Activated T-helper 2 cell treated with anti-CD3 and anti-CD28 coated beads, Interferon-gamma antibody, Interleukin-2, Interleukin-4, amounts not matched to agents 10 μg/mL and 5 μg/mL and 100 μg/mL, durations not matched to agents 14 hours and 24 hours and 36 hours (primary cell): ENCODE measurements at regions of chr21 and their contacts with region 1.

Region 1: GRCh38 chr21:43916691-43917514 is 51.9 kb downstream of the AGPAT3 start:
- DNase-seq: peak; percentile 62
- H3K4me3 Mint-ChIP-seq: peak overlapping the region; percentile 81
- H3K27ac Mint-ChIP-seq: peak overlapping the region; percentile 83
- H3K4me1 Mint-ChIP-seq: peaks cover 54% of the 10 kb centered on the region
- H3K27me3 Mint-ChIP-seq: no peaks in the 10 kb centered on the region

Region 2: GRCh38 chr21:43810505-43811261 is 106.2 kb before region 1 on chr21:
- intact Hi-C with region 1: loop called (anchors 1 kb)
- DNase-seq: peak; percentile 85
- H3K4me3 Mint-ChIP-seq: no peak overlapping the region
- H3K27ac Mint-ChIP-seq: peak overlapping the region; percentile 4
- H3K4me1 Mint-ChIP-seq: peaks cover 11% of the 10 kb centered on the region
- H3K27me3 Mint-ChIP-seq: no peaks in the 10 kb centered on the region

Region 3: GRCh38 chr21:43842742-43843141 is 74.2 kb before region 1 on chr21:
- intact Hi-C with region 1: no loop called
- DNase-seq: no peak
- H3K4me3 Mint-ChIP-seq: peak overlapping the region; percentile 20
- H3K27ac Mint-ChIP-seq: peak overlapping the region; percentile 29
- H3K4me1 Mint-ChIP-seq: peaks cover 16% of the 10 kb centered on the region
- H3K27me3 Mint-ChIP-seq: no peaks in the 10 kb centered on the region

Region 4: DNA sequence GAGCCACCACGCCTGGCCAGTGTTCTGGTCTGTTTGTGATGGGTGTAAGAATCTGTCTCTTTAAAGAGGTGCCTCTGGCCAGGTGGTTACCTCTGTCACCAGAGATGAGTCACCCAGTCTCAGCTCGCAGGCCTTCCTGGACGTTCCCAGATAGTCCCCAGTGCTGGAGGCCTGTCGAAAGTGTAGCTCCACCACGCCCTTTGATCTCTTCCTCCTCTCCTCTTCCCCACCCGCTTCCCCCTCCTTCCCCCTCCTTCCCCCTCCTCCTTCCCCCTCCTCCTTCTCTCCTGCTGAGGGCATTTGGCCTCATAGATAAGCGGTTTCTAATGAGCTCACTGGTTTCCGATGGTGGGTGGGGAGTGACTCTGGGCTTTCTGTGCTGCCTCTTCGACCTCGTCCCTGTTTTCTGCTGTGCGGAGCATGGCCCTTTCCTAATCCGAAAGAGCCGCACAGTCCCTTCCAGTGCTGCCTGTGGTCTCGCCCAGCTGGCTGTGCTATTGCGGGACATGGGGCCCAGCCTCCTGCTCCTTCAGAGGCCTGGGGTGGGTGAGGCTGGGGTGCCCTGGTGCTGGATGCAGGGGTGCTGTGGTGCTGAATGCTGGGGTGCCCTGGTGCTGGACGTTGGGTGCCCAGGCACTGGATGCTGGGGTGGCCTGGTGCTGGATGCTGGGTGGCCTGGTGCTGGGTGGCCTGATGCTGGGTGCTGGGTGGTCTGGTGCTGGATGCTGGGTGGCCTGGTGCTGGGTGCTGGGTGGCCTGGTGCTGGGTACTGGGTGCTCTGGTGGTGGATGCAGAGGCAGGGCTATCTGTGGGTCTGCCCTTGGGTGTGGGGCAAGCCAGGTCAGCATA is 32.7 kb before region 1 on chr21:
- intact Hi-C with region 1: loop called (anchors 5 kb)
- DNase-seq: no peak
- H3K4me3 Mint-ChIP-seq: no peak overlapping the region
- H3K27ac Mint-ChIP-seq: peak overlapping the region; percentile 79
- H3K4me1 Mint-ChIP-seq: peaks cover 62% of the 10 kb centered on the region
- H3K27me3 Mint-ChIP-seq: no peaks in the 10 kb centered on the region

Region 5: DNA sequence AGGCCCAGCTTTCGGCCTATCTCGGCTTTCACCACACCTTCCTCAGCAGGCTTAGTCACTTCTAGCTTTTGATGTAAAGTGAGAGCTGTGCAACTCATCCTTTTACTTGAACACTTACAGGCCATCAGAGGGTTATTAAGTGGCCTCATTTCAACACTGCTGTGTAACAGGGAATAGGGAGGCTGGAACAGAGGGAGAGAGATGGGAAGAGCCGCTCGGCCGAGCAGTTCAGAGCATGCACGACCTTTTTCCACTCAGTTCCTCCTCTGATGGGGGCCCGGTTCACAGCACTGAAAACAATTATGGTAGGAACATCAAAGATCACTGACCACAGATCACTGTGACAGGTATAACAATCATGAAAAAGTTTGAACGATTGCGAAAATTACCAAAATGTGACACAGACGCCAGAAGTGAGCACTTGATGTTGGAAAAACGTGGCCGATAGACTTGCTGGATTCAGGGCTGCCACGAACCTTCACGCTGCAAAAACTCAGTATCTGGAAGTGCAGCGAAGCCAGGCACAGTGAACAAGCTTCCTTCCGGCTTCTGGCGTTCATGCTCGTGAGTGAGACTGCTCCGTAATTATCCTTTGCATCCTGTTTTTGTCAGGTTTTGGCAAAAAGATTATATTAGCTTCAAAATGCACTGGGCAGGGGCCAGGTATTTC is 23.2 kb before region 1 on chr21:
- intact Hi-C with region 1: loop called (anchors 1 kb)
- DNase-seq: peak; percentile 26
- H3K4me3 Mint-ChIP-seq: peak overlapping the region; percentile 56
- H3K27ac Mint-ChIP-seq: peak overlapping the region; percentile 83
- H3K4me1 Mint-ChIP-seq: peaks cover 37% of the 10 kb centered on the region
- H3K27me3 Mint-ChIP-seq: no peaks in the 10 kb centered on the region